T-cell (primary cell): ENCODE measurements at regions of chrX and their contacts with region 1.

Region 1: GRCh38 chrX:119468186-119468929 is at the start of gene SLC25A5:
- DNase-seq: peak; percentile 52 to 89 (median 77)
- ATAC-seq: peak; percentile 84 to 91 (median 86)
- H3K4me3 ChIP-seq: peak within 1 kb of the TSS; percentile 72 to 77
- H3K4me3 Mint-ChIP-seq: peak within 1 kb of the TSS; percentile 82 to 93 (median 86)
- H3K27ac ChIP-seq: peak within 1 kb of the TSS; percentile 84
- H3K27ac Mint-ChIP-seq: peak within 1 kb of the TSS; percentile 84 to 88
- H3K4me1 ChIP-seq: peaks cover 0 to 16% of the 10 kb centered on the region in 2 experiments
- H3K4me1 Mint-ChIP-seq: peaks cover 9 to 16% (median 15%) of the 10 kb centered on the region in 3 donors
- H3K27me3 ChIP-seq: no peaks in the 10 kb centered on the region
- H3K27me3 Mint-ChIP-seq: peaks cover 0 to 5% of the 10 kb centered on the region in 2 donors
- total RNA-seq, gene SLC25A5: 102 to 171 (median 116) TPM

Region 2: DNA sequence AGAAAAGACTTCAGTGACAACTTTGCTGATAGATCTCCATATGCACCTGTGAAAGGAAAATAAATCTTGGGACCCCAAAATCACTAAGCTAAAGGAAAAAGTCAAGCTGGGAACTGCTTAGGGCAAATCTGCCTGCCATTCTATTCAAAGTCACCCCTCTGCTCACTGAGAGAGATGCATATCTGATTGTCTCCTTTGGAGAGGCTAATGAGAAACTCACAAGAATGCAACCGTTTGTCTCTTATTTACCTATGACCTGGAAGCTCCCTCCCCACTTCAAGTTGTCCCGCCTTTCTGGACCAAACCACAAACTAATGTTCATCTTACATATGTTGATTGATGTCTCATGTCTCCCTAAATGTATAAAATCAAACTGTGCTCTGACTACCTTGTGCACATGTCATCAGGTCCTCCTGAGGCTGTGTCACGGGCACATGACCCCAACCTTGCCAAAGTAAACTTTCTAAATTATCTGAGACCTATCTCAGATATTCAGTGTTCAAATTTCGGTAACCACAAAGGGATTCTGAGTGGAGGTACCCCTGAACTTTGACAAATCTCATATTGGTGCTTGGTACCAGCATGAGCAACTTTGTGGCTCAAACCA is 158.6 kb before region 1 on chrX:
- CTCF ChIA-PET with region 1: no interaction called
- POLR2A ChIA-PET with region 1: no interaction called
- DNase-seq: no peak
- ATAC-seq: no peak
- H3K4me3 ChIP-seq: no peak overlapping the region
- H3K4me3 Mint-ChIP-seq: no peak overlapping the region
- H3K27ac ChIP-seq: no peak overlapping the region
- H3K27ac Mint-ChIP-seq: no peak overlapping the region
- H3K4me1 ChIP-seq: no peaks in the 10 kb centered on the region
- H3K4me1 Mint-ChIP-seq: peaks cover 0 to 5% (median 3%) of the 10 kb centered on the region in 3 donors
- H3K27me3 ChIP-seq: no peaks in the 10 kb centered on the region
- H3K27me3 Mint-ChIP-seq: peaks cover 5 to 18% of the 10 kb centered on the region in 2 donors

Region 3: GRCh38 chrX:119541188-119541587 is 72.8 kb after region 1 on chrX:
- CTCF ChIA-PET with region 1: no interaction called
- POLR2A ChIA-PET with region 1: no interaction called
- DNase-seq: no peak
- ATAC-seq: no peak
- H3K4me3 ChIP-seq: no peak overlapping the region
- H3K4me3 Mint-ChIP-seq: no peak overlapping the region
- H3K27ac ChIP-seq: no peak overlapping the region
- H3K27ac Mint-ChIP-seq: no peak overlapping the region
- H3K4me1 ChIP-seq: no peaks in the 10 kb centered on the region
- H3K4me1 Mint-ChIP-seq: no peaks in the 10 kb centered on the region
- H3K27me3 ChIP-seq: no peaks in the 10 kb centered on the region
- H3K27me3 Mint-ChIP-seq: no peaks in the 10 kb centered on the region

Region 4: GRCh38 chrX:119943185-119943988 is 475.0 kb after region 1 on chrX and contains the start of gene NKAP:
- CTCF ChIA-PET with region 1: interaction called in 1 of 2 experiments, 18 read pairs
- POLR2A ChIA-PET with region 1: no interaction called
- DNase-seq: peak; percentile 51 to 89 (median 69)
- ATAC-seq: peak; percentile 81 to 86 (median 84)
- H3K4me3 ChIP-seq: peak within 1 kb of the TSS; percentile 72 to 80
- H3K4me3 Mint-ChIP-seq: peak within 1 kb of the TSS; percentile 81 to 99 (median 82)
- H3K27ac ChIP-seq: peak within 1 kb of the TSS; percentile 79
- H3K27ac Mint-ChIP-seq: peak within 1 kb of the TSS; percentile 74 to 95
- H3K4me1 ChIP-seq: peaks cover 2 to 21% of the 10 kb centered on the region in 2 experiments
- H3K4me1 Mint-ChIP-seq: peaks cover 16 to 29% (median 25%) of the 10 kb centered on the region in 3 donors
- H3K27me3 ChIP-seq: no peaks in the 10 kb centered on the region
- H3K27me3 Mint-ChIP-seq: peaks cover under 1 to 6% of the 10 kb centered on the region in 2 donors
- total RNA-seq, gene NKAP: 12.2 to 16.9 (median 14.2) TPM